Calu3 (cell line): ENCODE measurements at regions of chr17 and their contacts with region 1.

Region 1: DNA sequence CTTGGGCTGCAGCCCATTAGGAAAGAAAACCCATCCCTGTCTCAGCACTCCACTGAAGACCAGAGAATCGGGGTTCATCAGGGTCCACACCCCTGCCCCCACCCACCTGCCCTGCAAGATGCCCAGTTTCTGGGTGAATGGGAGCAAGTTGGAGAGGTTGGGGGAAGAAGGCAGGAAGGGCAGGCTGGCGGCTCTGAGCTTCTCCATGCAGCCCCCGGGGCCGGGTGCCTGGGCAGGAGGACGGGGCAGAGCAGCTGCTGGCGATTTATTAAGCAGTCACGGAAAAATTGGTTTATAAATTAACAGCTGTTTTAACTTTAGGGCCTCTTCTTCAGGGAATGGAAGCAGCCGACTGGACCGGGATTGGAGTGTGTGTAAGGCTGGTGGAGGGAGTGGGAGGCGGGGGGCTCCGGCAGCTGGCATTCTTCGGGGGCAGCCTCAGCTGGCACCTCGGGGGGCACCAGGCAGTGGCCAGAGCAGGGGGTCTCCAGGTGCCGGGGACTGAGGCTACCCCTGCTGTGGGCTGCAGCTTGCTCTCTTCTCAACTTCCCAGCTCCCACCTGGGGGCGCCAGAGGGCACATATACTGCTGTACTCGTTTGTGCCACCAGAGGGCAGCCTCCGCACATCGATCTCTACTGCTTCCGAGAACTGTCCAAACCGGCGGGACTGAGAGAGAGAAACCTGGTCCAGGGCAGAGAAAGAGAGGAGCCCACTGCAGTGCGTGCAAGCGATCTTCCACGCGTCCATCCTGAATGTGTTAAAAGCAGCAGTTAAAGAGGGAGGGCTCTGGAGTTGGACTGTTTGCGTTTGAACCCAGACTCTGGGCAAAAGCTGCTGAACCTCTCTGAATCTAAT is 5.0 kb upstream of the PPP1R1B start:
- DNase-seq: peak; percentile 100
- H3K4me3 Mint-ChIP-seq: peak overlapping the region; percentile 18
- H3K27ac Mint-ChIP-seq: peak overlapping the region; percentile 3
- H3K4me1 Mint-ChIP-seq: peaks cover 55% of the 10 kb centered on the region
- H3K27me3 Mint-ChIP-seq: peaks cover 83% of the 10 kb centered on the region
- CTCF ChIP-seq: no peak

Region 2: DNA sequence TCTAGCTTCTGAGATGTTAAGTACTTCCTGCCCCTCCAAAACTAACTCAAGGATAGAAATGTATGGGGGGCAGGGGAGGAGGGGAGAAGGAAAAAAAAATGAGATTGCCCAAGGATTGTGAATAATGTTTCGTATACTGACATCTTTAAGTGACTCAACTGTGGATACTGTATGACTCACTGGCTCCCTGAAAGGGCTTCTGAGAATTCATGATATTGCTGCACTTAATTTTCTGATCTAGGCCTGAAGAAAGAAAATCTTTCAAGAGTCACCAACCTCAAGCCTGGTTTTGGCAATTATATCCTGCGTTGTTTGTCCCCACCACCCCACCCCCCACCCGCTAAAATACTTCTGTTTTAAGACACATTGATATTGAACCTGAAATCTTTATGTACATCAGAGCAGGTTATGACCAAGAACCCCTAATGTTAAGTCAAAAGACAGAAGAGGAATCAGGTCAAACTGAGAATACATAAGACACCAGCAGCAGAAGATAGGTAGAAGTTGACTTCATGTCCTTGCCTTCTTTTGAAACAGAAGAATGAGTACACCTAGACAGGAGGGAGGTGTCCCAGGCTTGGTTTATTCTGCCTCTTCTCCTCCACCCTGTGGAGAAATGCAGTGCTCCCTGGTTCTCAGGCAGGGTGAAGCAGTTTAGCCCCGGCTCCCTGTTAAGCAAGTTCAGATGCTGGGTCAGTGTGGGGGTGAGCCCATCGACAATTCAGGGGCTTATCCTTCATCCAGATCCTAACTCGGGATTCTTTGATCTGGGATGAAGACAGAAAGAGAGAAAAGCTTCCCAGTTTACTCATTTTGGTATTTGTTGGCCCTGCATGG is 217.0 kb before region 1 on chr17:
- CTCF ChIA-PET with region 1: no interaction called
- intact Hi-C with region 1: no loop called
- DNase-seq: peak; percentile 38
- H3K4me3 Mint-ChIP-seq: no peak overlapping the region
- H3K27ac Mint-ChIP-seq: peak overlapping the region; percentile 61
- H3K4me1 Mint-ChIP-seq: peaks cover 38% of the 10 kb centered on the region
- H3K27me3 Mint-ChIP-seq: no peaks in the 10 kb centered on the region
- CTCF ChIP-seq: no peak

Region 3: GRCh38 chr17:39443326-39443725 is 178.4 kb before region 1 on chr17:
- CTCF ChIA-PET with region 1: no interaction called
- intact Hi-C with region 1: no loop called
- DNase-seq: no peak
- H3K4me3 Mint-ChIP-seq: no peak overlapping the region
- H3K27ac Mint-ChIP-seq: no peak overlapping the region
- H3K4me1 Mint-ChIP-seq: peaks cover 7% of the 10 kb centered on the region
- H3K27me3 Mint-ChIP-seq: no peaks in the 10 kb centered on the region
- CTCF ChIP-seq: no peak

Region 4: DNA sequence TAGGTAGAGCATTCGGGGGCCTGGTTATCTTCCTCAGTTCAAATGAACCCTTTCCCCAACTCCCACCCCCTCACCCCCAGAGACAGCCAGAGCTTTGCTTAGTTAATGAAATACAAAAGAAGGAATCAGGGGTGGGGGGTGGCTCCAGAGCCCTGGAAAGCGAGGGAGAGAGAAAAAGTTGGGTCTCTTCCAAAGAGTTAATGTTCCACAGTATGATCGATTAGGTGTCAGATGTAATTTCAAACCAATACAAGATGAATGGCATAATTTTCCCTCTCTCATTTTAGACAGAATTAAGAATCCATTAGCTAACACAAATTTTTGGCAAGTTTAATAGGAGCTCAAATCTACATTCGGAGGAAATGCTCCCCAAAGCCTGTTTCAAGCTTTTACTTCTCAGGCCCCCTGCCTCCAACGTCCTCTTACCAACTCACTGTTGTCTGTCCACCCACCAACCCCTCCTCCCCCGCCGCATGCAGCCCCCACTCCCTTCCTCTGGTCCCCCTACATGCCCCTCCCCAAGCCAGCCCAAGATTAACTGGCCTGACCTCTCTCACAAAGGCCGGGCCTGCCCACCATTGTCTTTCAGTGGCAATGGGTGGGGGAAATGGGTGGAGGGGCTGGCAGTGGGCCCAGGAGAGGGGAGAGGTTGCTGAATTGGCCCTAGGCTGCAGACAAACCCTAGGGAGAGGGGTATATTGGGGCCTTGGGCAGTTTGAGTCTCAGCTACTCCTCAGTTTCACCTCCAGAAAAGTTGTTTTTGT is 42.3 kb before region 1 on chr17:
- CTCF ChIA-PET with region 1: interaction called, 42,089 read pairs
- intact Hi-C with region 1: no loop called
- DNase-seq: peak; percentile 52
- H3K4me3 Mint-ChIP-seq: no peak overlapping the region
- H3K27ac Mint-ChIP-seq: no peak overlapping the region
- H3K4me1 Mint-ChIP-seq: no peaks in the 10 kb centered on the region
- H3K27me3 Mint-ChIP-seq: peaks cover 88% of the 10 kb centered on the region
- CTCF ChIP-seq: no peak

Region 5: GRCh38 chr17:39730095-39730921 is 108.6 kb after region 1 on chr17 and contains the start of gene MIEN1:
- CTCF ChIA-PET with region 1: interaction called, 42,089 read pairs
- intact Hi-C with region 1: loop called (anchors 1 kb)
- DNase-seq: no peak
- H3K4me3 Mint-ChIP-seq: peak within 1 kb of the TSS; percentile 79
- H3K27ac Mint-ChIP-seq: peak within 1 kb of the TSS; percentile 90
- H3K4me1 Mint-ChIP-seq: peaks cover 34% of the 10 kb centered on the region
- H3K27me3 Mint-ChIP-seq: no peaks in the 10 kb centered on the region
- CTCF ChIP-seq: no peak
- total RNA-seq, gene MIEN1: 2,121 and 2,217 TPM in 2 replicates

Region 6: DNA sequence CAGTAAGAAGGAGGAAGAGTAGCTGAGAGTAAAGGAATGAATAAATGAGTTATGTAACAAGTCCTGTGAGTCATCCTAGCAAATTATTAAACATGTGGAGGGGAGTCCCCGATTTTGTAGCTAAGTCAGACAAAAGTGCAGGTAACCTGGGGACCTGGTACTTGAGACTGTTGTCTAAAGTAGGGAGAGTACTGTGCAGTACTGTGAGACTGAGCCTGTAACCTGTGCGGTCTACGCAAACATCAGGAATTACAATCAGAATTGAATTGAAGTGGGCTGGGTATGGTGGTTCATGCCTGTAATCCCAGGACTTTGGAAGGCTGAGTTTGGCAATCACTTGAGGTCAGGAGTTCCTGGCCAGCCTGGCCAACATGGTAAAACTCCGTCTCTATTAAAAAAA is 206.7 kb after region 1 on chr17:
- CTCF ChIA-PET with region 1: interaction called, 272 read pairs
- intact Hi-C with region 1: loop called (anchors 2 kb)
- DNase-seq: peak; percentile 100
- H3K4me3 Mint-ChIP-seq: peak overlapping the region; percentile 36
- H3K27ac Mint-ChIP-seq: peak overlapping the region; percentile 48
- H3K4me1 Mint-ChIP-seq: peaks cover 17% of the 10 kb centered on the region
- H3K27me3 Mint-ChIP-seq: no peaks in the 10 kb centered on the region
- CTCF ChIP-seq: no peak

Region 7: DNA sequence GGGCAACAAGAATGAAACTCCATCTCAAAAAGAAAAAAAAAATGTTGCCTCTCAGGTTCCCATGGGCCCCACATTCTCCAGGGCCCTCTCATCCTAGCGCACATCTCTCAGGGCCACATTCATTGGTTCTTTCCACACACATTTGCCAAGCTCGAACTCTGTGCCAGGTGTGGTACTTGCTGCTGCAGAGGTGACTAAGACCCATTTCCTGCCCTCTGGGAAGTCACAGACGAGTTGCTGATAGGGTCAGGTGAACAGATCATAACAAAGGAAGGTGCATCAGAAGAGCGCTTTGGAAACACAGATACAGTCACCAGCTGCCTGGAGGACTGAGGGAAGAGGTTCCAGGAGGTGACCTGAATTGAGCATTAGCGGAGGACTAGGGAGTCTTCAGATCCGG is 342.1 kb after region 1 on chr17:
- CTCF ChIA-PET with region 1: interaction called, 5,681 read pairs
- intact Hi-C with region 1: loop called (anchors 1 kb)
- DNase-seq: peak; percentile 94
- H3K4me3 Mint-ChIP-seq: no peak overlapping the region
- H3K27ac Mint-ChIP-seq: peak overlapping the region; percentile 0
- H3K4me1 Mint-ChIP-seq: peaks cover 45% of the 10 kb centered on the region
- H3K27me3 Mint-ChIP-seq: peaks cover 32% of the 10 kb centered on the region
- CTCF ChIP-seq: no peak

Region 8: DNA sequence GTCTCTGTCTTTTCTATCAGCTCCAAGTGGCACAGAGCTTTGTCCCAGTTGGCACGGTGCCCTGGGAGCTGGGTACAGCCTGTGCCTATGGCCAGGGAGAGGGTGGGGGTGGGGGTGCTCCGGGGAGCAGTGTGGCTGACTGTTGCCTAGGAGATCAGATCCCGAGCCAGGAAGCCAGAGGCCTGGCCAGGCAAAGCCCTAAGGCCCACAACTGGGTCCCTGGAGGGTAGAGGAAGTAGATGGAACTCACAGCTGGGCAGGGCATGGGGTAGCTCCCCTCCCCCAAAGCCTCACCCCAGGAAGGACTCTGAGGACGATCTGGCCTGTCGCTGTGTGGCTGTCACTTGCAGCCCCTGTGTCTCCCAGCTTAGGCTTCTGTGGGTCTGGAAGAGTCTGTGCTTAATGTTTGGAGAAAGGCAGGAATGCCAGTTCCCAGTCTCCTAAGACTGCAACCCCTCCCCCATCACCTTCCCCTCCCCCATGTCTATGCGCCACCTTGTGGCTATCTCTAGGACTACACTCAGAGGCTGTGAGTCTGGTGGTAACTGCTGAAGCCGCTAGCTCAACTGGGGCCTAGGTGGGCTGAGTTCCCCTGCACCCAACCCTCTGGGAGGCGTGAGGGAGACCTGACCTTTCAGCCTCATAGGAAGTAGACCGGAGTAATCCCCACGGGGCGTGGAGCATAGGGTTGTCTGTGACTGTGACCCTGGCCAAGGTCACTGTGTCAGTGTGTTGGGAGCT is 453.6 kb after region 1 on chr17:
- CTCF ChIA-PET with region 1: interaction called, 17 read pairs
- intact Hi-C with region 1: no loop called
- DNase-seq: peak; percentile 98
- H3K4me3 Mint-ChIP-seq: peak overlapping the region; percentile 14
- H3K27ac Mint-ChIP-seq: peak overlapping the region; percentile 6
- H3K4me1 Mint-ChIP-seq: peaks cover 70% of the 10 kb centered on the region
- H3K27me3 Mint-ChIP-seq: no peaks in the 10 kb centered on the region
- CTCF ChIP-seq: no peak